Tibial artery (tissue), 4 donors: ENCODE measurements at regions of chr22 and their contacts with region 1.

Region 1: GRCh38 chr22:32951076-32951806 is 106.9 kb downstream of the SYN3 start:
- DNase-seq: no peak
- H3K4me3 ChIP-seq: no peak overlapping the region
- H3K27ac ChIP-seq: no peak overlapping the region
- H3K4me1 ChIP-seq: no peaks in the 10 kb centered on the region
- H3K27me3 ChIP-seq: no peaks in the 10 kb centered on the region
- CTCF ChIP-seq: no peak

Region 2: GRCh38 chr22:32764330-32765131 is 186.7 kb before region 1 on chr22:
- intact Hi-C with region 1: no loop called
- DNase-seq: peak; percentile 86 to 89
- H3K4me3 ChIP-seq: no peak overlapping the region
- H3K27ac ChIP-seq: peak overlapping the region; percentile 42 to 56
- H3K4me1 ChIP-seq: peaks cover 0 to 18% (median 7%) of the 10 kb centered on the region in 4 donors
- H3K27me3 ChIP-seq: peaks cover 0 to 17% of the 10 kb centered on the region in 2 donors
- CTCF ChIP-seq: no peak

Region 3: GRCh38 chr22:32880893-32881596 is 70.2 kb before region 1 on chr22:
- intact Hi-C with region 1: loop called (anchors 10 kb)
- DNase-seq: peak in 1 of 2 donors; percentile 72
- H3K4me3 ChIP-seq: no peak overlapping the region
- H3K27ac ChIP-seq: no peak overlapping the region
- H3K4me1 ChIP-seq: peaks cover 0 to 5% (median 2%) of the 10 kb centered on the region in 4 donors
- H3K27me3 ChIP-seq: peaks cover 0 to 10% of the 10 kb centered on the region in 2 donors
- CTCF ChIP-seq: no peak